GM10248 (cell line): ENCODE measurements at regions of chr21 and their contacts with region 1.

Region 1: GRCh38 chr21:15472108-15473040 is 257.4 kb upstream of the USP25 start:
- DNase-seq: no peak
- CTCF ChIP-seq: no peak

Region 2: DNA sequence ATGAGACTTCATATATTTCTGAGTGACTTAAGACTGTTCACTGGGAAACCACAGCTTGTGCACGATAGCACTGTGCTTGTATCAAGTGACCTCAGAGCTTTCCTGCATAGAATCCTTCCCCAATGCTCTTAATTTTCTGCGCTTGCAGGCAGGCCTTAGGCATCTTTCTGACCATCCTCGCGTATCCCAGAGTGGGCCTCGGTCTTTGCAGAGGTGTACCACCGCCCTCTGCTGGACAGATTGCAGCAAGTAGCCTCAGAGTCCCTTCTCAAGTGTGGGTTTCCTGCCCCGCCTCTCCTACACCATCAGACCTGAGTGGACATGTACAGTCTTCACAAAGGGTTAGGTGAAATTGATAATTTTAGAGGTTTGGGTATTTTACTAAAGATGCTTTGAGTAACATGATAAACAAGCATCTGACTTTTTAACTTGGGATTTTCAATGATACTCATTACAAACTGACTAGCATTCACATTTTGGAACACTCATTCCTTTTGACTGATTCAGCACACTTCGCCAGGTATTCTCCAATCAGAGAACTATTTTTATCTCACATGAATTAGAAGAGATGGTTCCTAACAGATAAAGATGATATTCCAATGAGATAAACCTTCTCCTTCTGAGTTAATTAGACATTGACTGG is 10.9 kb after region 1 on chr21:
- CTCF ChIA-PET with region 1: interaction called, 13 read pairs
- POLR2A ChIA-PET with region 1: no interaction called
- DNase-seq: peak; percentile 58
- CTCF ChIP-seq: peak; percentile 87

Region 3: GRCh38 chr21:15495965-15496364 is 23.6 kb after region 1 on chr21:
- CTCF ChIA-PET with region 1: no interaction called
- POLR2A ChIA-PET with region 1: no interaction called
- DNase-seq: no peak
- CTCF ChIP-seq: no peak

Region 4: GRCh38 chr21:15514073-15514946 is 41.9 kb after region 1 on chr21:
- CTCF ChIA-PET with region 1: no interaction called
- POLR2A ChIA-PET with region 1: no interaction called
- DNase-seq: peak; percentile 48
- CTCF ChIP-seq: no peak

Region 5: DNA sequence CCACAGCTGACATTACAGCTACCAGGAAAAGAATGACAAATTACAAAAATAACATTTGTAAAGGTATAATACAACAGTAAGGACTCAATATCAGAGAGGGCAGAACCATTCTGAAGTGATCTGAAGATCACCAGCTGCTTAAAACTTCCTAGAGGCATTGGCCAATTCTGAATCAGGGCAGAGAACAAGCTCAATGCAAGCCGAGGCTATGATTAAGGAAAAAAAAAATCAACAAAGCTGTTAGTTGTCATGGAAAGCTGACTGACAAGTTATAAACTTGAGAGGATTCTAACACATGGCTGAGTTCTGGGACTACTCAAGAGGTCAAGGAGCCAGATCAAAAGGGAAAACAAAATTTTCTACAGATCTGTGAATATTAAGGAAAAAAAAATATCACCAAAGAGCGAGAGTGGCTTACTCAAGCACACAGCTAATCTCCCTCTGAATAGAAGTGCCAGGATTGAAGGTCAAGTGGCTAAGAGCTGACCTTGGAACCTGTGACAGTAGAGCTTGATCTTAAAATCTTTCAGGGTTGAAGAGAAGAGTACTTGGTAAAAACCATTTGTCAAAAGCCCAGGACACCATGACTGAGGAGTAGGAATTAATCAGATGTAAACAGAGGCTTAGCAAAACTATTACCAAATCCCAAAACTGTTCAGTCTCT is 640.8 kb after region 1 on chr21:
- CTCF ChIA-PET with region 1: no interaction called
- POLR2A ChIA-PET with region 1: no interaction called
- DNase-seq: no peak
- CTCF ChIP-seq: no peak